ENCODE measurements at regions of chr3 and their contacts with region 1.

Region 1: GRCh38 chr3:42539869-42540714 is 37.6 kb downstream of the VIPR1 start:
- DNase-seq: peak; percentile 54
- ATAC-seq: peak; percentile 59
- H3K4me3 ChIP-seq: no peak overlapping the region
- H3K27ac ChIP-seq: no peak overlapping the region
- H3K4me1 ChIP-seq: peaks cover 13% of the 10 kb centered on the region
- H3K27me3 ChIP-seq: no peaks in the 10 kb centered on the region
- CTCF ChIP-seq: peak; percentile 79
- EP300 ChIP-seq: no peak
- POLR2A ChIP-seq: no peak
- RAD21 ChIP-seq: 0 out of 2 replicates have a peak, but pooled peaks have one; percentile 24

Region 2: GRCh38 chr3:42229942-42230688 is 310.0 kb before region 1 on chr3:
- CTCF ChIA-PET with region 1: interaction called, 9 read pairs
- POLR2A ChIA-PET with region 1: no interaction called
- in situ Hi-C with region 1: loop called (anchors 10 kb)
- intact Hi-C with region 1: no loop called
- DNase-seq: peak; percentile 50
- ATAC-seq: peak; percentile 51
- H3K4me3 ChIP-seq: no peak overlapping the region
- H3K27ac ChIP-seq: no peak overlapping the region
- H3K4me1 ChIP-seq: peaks cover 12% of the 10 kb centered on the region
- H3K27me3 ChIP-seq: peaks cover 0 to 12% of the 10 kb centered on the region in 2 experiments; a peak in 1 of 5 replicates
- CTCF ChIP-seq: peak; percentile 69
- EP300 ChIP-seq: no peak
- POLR2A ChIP-seq: no peak
- RAD21 ChIP-seq: peak; percentile 74

Region 3: DNA sequence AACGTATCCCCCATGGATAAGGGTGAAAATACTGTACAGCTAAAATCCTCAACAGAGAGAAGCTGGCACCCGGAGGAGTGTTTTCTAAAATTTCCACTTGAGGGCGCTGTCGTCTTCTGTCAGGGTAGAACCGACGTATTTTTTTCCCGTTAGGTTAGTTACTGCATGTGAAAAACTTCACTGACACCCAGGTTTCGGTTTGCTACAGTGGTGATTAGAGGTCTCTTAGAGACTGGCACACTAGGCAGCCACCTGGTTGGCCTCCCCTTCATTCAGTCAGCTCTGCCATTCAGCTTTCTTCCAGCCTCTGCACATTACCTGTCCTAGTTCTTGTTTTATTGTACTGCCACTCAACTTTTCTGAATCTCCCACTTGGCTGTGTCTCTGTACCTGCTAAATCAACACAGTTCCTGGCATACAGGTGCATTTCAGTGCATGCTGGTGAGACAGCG is 292.5 kb before region 1 on chr3:
- CTCF ChIA-PET with region 1: interaction called, 10 read pairs
- POLR2A ChIA-PET with region 1: no interaction called
- in situ Hi-C with region 1: no loop called
- intact Hi-C with region 1: loop called (anchors 2 kb)
- DNase-seq: peak; percentile 59
- ATAC-seq: peak; percentile 85
- H3K4me3 ChIP-seq: 0 out of 6 replicates have a peak overlapping the region, but pooled peaks of 1 of the 3 experiments have one; percentile 12
- H3K27ac ChIP-seq: no peak overlapping the region
- H3K4me1 ChIP-seq: no peaks in the 10 kb centered on the region
- H3K27me3 ChIP-seq: peaks cover 0 to 22% of the 10 kb centered on the region in 2 experiments; a peak in 3 of 5 replicates
- CTCF ChIP-seq: peak; percentile 82
- EP300 ChIP-seq: no peak
- POLR2A ChIP-seq: no peak
- RAD21 ChIP-seq: peak; percentile 81

Region 4: GRCh38 chr3:42502429-42503250 is 37.5 kb before region 1 on chr3 and contains the start of gene VIPR1:
- CTCF ChIA-PET with region 1: no interaction called
- POLR2A ChIA-PET with region 1: no interaction called
- in situ Hi-C with region 1: no loop called
- intact Hi-C with region 1: loop called (anchors 5 kb)
- DNase-seq: peak; percentile 30
- ATAC-seq: peak; percentile 88
- H3K4me3 ChIP-seq: peak within 1 kb of the TSS; percentile 46 to 69 (median 49)
- H3K27ac ChIP-seq: no peak within 1 kb of the TSS
- H3K4me1 ChIP-seq: peaks cover 11% of the 10 kb centered on the region; the same call in 1 of the 2 replicates
- H3K27me3 ChIP-seq: peaks cover 9 to 60% of the 10 kb centered on the region in 2 experiments; a peak in 4 of 5 replicates
- CTCF ChIP-seq: no peak
- EP300 ChIP-seq: no peak
- POLR2A ChIP-seq: no peak
- RAD21 ChIP-seq: no peak
- total RNA-seq, gene VIPR1: 0.04 TPM in 1 of 2 replicates, not detected in the other

Region 5: DNA sequence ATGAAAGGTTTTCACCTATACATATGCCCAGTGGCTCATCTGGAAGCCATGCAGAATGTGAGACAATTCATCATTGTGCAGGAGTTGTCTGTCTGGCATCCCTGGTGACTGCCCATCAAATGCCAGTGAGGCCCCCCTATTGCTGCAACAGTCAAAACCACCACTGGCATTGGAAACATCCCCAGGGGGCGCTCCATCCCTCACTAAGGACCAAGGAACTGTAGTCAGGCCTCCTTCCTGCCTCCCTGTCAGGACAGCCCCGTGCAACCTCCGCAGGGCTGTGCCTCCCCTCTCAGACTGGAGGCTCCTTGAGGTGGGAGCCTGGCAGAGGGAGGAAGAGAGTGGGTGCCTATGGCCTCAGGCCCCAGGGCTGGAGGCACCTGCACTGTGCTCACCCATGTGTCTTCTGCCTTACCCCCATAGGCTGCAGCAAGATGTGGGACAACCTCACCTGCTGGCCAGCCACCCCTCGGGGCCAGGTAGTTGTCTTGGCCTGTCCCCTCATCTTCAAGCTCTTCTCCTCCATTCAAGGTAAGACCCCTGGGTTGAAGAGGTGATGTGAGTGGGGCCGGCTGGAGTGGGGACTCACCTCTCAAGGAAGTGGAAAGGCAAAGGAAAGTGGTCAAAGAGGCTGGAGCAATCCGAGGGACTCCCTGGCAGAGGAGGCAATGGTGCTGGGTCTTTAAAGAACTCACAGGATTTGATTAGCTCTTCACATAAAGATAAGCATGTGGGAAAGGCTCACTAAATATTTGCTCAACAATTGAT is 21.1 kb before region 1 on chr3:
- CTCF ChIA-PET with region 1: no interaction called
- POLR2A ChIA-PET with region 1: no interaction called
- in situ Hi-C with region 1: no loop called
- intact Hi-C with region 1: no loop called
- DNase-seq: no peak
- ATAC-seq: no peak
- H3K4me3 ChIP-seq: no peak overlapping the region
- H3K27ac ChIP-seq: no peak overlapping the region
- H3K4me1 ChIP-seq: peaks cover 22% of the 10 kb centered on the region
- H3K27me3 ChIP-seq: no peaks in the 10 kb centered on the region; a peak in 1 of 5 replicates
- CTCF ChIP-seq: peak; percentile 44
- EP300 ChIP-seq: no peak
- POLR2A ChIP-seq: no peak
- RAD21 ChIP-seq: no peak